HAP-1 (cell line): ENCODE measurements at regions of chr5 and their contacts with region 1.

Region 1: GRCh38 chr5:36079200-36079761 is 12.6 kb upstream of the UGT3A2 start:
- DNase-seq: peak; percentile 76 to 79
- H3K4me3 ChIP-seq: peak overlapping the region; percentile 5; the same call in 1 of the 2 replicates
- H3K4me1 ChIP-seq: peaks cover 46% of the 10 kb centered on the region
- H3K27me3 ChIP-seq: no peaks in the 10 kb centered on the region

Region 2: DNA sequence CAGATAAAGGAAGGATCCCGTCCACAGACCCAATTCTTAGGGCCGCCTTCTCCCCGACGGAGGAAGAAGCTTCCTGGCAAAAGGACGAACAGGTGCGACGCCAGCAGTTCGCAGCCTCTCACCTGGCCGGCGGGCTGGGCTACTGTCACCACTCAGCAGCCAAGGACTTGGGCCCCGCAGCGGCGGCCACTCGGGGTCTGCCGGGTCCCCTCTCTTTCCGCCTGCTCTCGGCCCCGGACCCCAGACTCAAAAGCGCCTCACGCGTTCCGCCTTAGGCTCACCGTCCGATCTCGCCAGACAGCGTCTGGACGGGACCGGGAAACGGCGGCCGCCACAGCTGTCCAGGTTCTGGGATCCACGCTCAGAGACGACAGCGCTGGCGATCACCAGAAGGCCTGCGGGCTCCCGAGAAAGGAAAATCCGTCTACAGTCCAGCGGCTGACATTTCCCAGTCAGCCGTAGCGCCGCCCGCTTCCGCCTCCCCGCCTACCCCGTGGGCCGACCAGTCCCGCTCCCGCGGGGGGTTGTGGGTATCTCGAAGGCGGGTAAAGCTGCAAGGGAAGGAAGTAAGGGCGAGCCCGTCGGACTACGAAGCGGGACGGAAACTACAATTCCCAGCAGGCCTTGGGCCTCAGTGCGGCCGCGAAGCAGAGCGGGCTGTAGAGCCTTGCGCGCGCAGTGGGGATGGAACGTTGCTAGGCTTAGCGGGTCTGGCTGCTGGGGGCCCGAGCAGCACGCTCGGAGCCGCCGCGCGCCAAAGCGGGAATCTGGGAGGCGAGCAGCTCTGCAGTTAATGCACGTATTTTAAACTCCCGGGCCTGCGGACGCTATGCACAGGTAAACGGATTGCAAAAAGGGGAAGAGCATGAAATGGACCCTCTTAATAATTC is 72.4 kb after region 1 on chr5 and contains the starts of genes LMBRD2 and SKP2:
- in situ Hi-C with region 1: loop called (anchors 5 kb)
- DNase-seq: peak; percentile 98
- H3K4me3 ChIP-seq: peak within 1 kb of the TSS; percentile 85
- H3K4me1 ChIP-seq: peaks cover 12% of the 10 kb centered on the region
- H3K27me3 ChIP-seq: no peaks in the 10 kb centered on the region